ENCODE measurements at regions of chr9 and their contacts with region 1.

Region 1: DNA sequence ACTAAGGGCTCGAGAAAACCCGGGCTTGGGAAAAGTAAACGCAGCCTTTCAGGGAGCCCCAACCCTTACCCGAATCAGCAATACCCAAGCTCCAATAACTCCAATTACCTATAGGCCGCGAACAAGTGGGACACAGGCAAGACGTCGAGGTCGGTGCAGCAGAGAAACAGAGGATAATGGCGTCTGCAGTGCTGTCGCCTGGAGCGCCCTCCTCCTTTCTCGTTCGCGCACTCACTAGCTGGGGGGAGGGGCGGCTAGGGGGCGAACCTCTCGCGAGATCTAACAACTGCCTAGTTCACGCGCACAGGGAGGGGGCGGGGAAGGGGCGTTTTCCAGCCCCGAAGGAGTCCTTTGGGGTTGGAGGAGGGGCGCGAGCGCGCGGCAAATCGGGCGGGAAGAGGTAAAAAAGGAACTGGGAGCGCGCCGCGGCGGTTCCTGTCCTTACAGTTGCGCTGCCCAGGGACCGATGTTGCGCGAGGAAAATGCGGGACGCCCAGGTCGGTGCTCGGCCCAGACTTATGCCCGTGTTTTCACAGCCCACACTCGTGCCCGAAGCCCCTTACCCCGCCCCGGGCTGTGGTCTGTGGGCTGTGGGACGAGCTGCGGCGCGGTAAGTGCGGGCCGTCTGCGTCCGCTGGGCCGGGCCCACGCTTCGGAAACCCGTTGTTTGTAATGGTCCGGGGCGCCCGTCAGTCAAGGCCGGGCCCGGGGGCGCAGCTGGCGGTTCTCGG is at the start of gene RMI1:
- DNase-seq: peak; percentile 94 to 99
- H3K4me3 ChIP-seq: peak within 1 kb of the TSS; percentile 58 to 94
- H3K27ac ChIP-seq: peak within 1 kb of the TSS; percentile 96 to 99
- H3K4me1 ChIP-seq: peaks cover 5 to 18% of the 10 kb centered on the region in 2 donors
- H3K27me3 ChIP-seq: no peaks in the 10 kb centered on the region
- CTCF ChIP-seq: no peak
- total RNA-seq, gene RMI1: 0.21 TPM

Region 2: GRCh38 chr9:83707768-83708514 is 272.6 kb before region 1 on chr9 and contains the start of gene UBQLN1:
- intact Hi-C with region 1: loop called (anchors 1 kb)
- DNase-seq: peak; percentile 72 to 95
- H3K4me3 ChIP-seq: peak within 1 kb of the TSS; percentile 88 to 96
- H3K27ac ChIP-seq: peak within 1 kb of the TSS; percentile 98 to 99
- H3K4me1 ChIP-seq: no peaks in the 10 kb centered on the region
- H3K27me3 ChIP-seq: no peaks in the 10 kb centered on the region
- CTCF ChIP-seq: no peak
- total RNA-seq, gene UBQLN1: 118 TPM

Region 3: GRCh38 chr9:83920927-83921707 is 59.4 kb before region 1 on chr9 and contains the start of gene KIF27:
- intact Hi-C with region 1: loop called (anchors 1 kb)
- DNase-seq: peak; percentile 95 to 99
- H3K4me3 ChIP-seq: peak within 1 kb of the TSS; percentile 93 to 99
- H3K27ac ChIP-seq: peak within 1 kb of the TSS; percentile 95 to 99
- H3K4me1 ChIP-seq: no peaks in the 10 kb centered on the region
- H3K27me3 ChIP-seq: no peaks in the 10 kb centered on the region
- CTCF ChIP-seq: peak in 2 of 3 experiments; percentile 41 to 67
- total RNA-seq, gene KIF27: 1.9 TPM

Region 4: DNA sequence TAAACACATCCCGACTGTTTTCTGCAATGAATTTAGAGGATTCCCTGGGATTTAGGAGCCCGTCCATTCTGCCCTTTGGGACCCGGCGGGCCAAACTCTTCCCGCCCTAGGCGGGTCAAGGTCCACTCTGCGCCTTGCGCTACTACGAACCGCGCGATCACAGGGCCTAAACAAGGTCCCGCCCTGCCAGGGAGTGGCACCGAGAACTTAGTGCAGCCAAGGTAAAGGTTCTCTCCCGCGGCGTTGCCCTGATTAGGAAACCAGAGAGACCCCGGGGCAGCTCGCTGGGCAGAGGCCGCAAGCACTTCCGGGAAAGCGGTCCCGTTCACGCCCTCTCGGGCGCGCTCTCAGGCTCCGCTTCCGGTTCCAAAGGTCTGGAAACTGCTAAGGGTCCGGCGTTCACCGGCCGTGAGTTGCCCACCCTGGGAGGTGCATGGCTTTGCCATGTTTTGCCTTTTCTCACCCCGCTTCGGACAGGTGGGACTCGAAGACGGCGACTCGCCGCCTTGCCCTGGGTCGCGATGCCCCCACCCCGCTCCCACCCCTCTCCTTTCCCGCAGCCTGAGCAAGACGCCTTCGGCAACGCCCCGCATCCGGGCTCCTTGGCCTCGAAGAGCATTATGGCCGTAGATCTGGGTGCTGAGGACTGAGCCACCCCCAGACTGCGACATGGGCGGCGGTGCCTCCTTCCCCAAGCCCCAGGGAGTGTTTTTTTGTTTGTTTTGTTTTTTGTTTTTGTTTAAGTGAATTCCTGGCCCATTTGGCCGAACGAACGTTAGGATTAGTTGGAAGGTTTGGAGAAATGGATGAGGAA is 23.9 kb before region 1 on chr9:
- intact Hi-C with region 1: loop called (anchors 1 kb)
- DNase-seq: peak in 1 of 2 donors; percentile 86
- H3K4me3 ChIP-seq: peak overlapping the region; percentile 72 to 75
- H3K27ac ChIP-seq: peak overlapping the region; percentile 78 to 90
- H3K4me1 ChIP-seq: peaks cover 0 to 4% of the 10 kb centered on the region in 2 donors
- H3K27me3 ChIP-seq: no peaks in the 10 kb centered on the region
- CTCF ChIP-seq: no peak

Region 5: DNA sequence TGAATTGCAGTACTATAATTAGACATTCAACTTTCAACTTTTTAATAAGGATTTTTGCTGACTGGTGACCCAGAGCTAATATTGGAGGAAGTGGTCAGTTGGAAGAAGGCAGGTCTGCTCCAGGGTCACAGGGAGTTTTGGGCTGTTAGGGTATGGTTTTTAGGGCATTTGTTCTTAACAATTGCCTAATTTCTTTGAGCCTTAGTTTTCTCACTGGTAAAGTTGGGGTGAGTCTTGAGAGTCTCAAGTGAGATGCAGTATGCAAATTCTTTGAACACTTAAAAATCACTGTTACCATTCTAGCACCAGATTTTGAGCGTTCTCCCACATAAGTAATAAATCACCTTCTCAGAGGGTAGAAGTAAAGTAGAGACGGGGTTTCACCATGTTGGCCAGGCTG is 51.0 kb after region 1 on chr9:
- intact Hi-C with region 1: no loop called
- DNase-seq: no peak
- H3K4me3 ChIP-seq: no peak overlapping the region
- H3K27ac ChIP-seq: no peak overlapping the region
- H3K4me1 ChIP-seq: no peaks in the 10 kb centered on the region
- H3K27me3 ChIP-seq: no peaks in the 10 kb centered on the region
- CTCF ChIP-seq: no peak

Region 6: DNA sequence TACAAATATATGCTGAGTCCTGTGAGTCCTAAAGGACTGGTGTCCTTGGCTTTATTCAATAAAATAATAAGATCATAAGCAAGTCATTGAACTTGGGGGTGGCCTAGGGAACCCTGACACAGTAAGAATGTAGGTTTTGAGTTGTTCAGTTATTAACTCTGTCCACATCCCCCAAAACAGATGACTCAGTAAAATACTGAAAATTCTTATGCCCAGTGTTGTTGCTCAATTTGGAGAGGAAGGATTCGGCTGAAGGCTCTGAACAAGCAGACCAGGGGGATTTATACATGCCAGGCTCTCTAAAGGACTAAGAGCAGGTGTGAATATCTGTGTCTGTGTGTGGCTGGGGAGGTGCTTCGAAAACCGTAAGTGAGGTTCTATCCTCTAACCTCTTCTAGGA is 173.8 kb after region 1 on chr9:
- intact Hi-C with region 1: no loop called
- DNase-seq: no peak
- H3K4me3 ChIP-seq: no peak overlapping the region
- H3K27ac ChIP-seq: no peak overlapping the region
- H3K4me1 ChIP-seq: no peaks in the 10 kb centered on the region
- H3K27me3 ChIP-seq: no peaks in the 10 kb centered on the region
- CTCF ChIP-seq: no peak

Region 7: DNA sequence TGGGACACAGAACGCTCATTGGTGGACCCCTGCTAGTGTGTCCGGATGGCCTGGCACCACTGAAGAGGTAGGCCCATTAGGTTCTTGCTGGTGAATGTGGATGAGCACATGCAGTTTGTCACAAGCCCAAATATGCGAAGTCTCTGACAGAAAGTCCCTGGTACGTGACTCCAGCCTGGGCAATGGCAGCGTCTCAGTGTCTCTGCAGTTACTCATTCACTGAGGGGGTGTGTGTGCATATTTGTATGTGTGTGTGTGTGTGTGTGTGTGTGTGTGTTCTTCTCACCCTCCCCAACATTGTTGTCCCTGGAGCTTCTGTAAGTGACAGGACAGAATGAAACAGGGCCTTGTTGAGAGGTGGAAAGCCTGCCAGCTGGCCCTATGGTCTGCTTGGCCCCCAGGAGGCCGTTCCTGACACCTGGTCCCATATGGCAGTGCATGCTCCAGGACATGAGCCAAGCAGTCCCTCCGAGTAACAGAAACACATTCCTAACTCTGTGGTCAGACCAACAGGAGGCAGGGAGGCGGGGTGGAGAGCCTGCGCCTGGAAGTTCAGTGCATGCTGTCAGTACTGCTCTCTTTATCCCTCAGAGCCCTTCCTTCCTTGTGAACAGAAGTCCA is 190.1 kb after region 1 on chr9:
- intact Hi-C with region 1: loop called (anchors 2 kb)
- DNase-seq: peak; percentile 11 to 85
- H3K4me3 ChIP-seq: no peak overlapping the region
- H3K27ac ChIP-seq: peak overlapping the region; percentile 3 to 44
- H3K4me1 ChIP-seq: no peaks in the 10 kb centered on the region
- H3K27me3 ChIP-seq: no peaks in the 10 kb centered on the region
- CTCF ChIP-seq: no peak

Region 8: GRCh38 chr9:84668196-84669012 is 687.8 kb after region 1 on chr9:
- intact Hi-C with region 1: loop called (anchors 5 kb)
- DNase-seq: peak in 1 of 2 donors; percentile 87
- H3K4me3 ChIP-seq: peak overlapping the region; percentile 43 to 77
- H3K27ac ChIP-seq: peak overlapping the region in 1 of 2 donors; percentile 13
- H3K4me1 ChIP-seq: no peaks in the 10 kb centered on the region
- H3K27me3 ChIP-seq: no peaks in the 10 kb centered on the region
- CTCF ChIP-seq: peak; percentile 37 to 58 (median 48)